Activated CD4-positive, alpha-beta T cell treated with anti-CD3 and anti-CD28 coated beads for 36 hours (primary cell): ENCODE measurements at regions of chr1 and their contacts with region 1.

Region 1: GRCh38 chr1:156689035-156689952 is 12.1 kb upstream of the NES start:
- DNase-seq: peak; percentile 88
- ATAC-seq: peak; percentile 96
- H3K4me3 Mint-ChIP-seq: peak overlapping the region; percentile 6
- H3K27ac Mint-ChIP-seq: no peak overlapping the region
- H3K4me1 Mint-ChIP-seq: peaks cover 29% of the 10 kb centered on the region
- H3K27me3 Mint-ChIP-seq: peaks cover 48% of the 10 kb centered on the region

Region 2: DNA sequence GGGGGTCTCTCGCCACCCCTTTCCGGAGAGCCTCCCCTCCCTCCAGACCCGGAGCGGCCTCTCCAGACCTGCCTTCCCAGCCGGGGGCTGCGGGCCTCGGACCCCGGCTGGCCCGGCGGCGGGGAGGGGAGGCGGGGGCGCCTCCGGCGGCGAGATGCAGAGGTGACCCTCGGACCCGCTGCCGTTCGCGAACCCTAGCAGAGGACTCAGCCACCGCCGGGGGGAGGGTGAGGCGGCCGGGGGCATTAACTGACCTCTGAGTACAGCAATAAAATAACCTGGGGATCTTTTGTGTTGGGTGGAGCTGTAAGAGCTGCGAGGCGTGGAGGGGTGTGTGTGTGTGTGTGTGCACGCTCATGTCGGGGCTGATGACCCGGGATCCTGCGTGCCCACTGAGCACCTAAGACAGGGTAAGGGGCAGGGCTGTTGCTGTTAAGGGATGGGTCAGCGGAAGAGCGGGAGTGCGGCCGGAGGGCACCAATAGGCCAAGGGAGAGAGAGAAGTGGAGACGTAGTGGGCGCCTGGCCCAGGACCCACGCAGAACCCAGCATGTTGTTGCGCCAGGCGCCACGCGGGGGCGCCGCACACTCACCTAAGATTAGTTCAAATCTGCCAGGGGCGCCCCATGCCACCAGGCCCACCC is 63.7 kb before region 1 on chr1:
- CTCF ChIA-PET with region 1: interaction called, 15 read pairs
- POLR2A ChIA-PET with region 1: no interaction called
- intact Hi-C with region 1: no loop called
- DNase-seq: peak; percentile 83
- ATAC-seq: peak; percentile 65
- H3K4me3 Mint-ChIP-seq: peak overlapping the region; percentile 53
- H3K27ac Mint-ChIP-seq: no peak overlapping the region
- H3K4me1 Mint-ChIP-seq: peaks cover 6% of the 10 kb centered on the region
- H3K27me3 Mint-ChIP-seq: peaks cover 41% of the 10 kb centered on the region

Region 3: GRCh38 chr1:156677616-156678596 is 11.4 kb before region 1 on chr1:
- CTCF ChIA-PET with region 1: interaction called, 57 read pairs
- POLR2A ChIA-PET with region 1: interaction called, 3 read pairs
- intact Hi-C with region 1: no loop called
- DNase-seq: peak; percentile 53
- ATAC-seq: peak; percentile 44
- H3K4me3 Mint-ChIP-seq: no peak overlapping the region
- H3K27ac Mint-ChIP-seq: no peak overlapping the region
- H3K4me1 Mint-ChIP-seq: peaks cover 11% of the 10 kb centered on the region
- H3K27me3 Mint-ChIP-seq: peaks cover 43% of the 10 kb centered on the region

Region 4: GRCh38 chr1:156717275-156717805 is 28.0 kb after region 1 on chr1:
- CTCF ChIA-PET with region 1: interaction called, 50 read pairs
- POLR2A ChIA-PET with region 1: no interaction called
- intact Hi-C with region 1: no loop called
- DNase-seq: no peak
- ATAC-seq: no peak
- H3K4me3 Mint-ChIP-seq: no peak overlapping the region
- H3K27ac Mint-ChIP-seq: no peak overlapping the region
- H3K4me1 Mint-ChIP-seq: peaks cover 8% of the 10 kb centered on the region
- H3K27me3 Mint-ChIP-seq: no peaks in the 10 kb centered on the region

Region 5: GRCh38 chr1:156860113-156860627 is 170.9 kb after region 1 on chr1:
- CTCF ChIA-PET with region 1: interaction called, 27 read pairs
- POLR2A ChIA-PET with region 1: no interaction called
- intact Hi-C with region 1: loop called (anchors 1 to 5 kb)
- DNase-seq: peak; percentile 77
- ATAC-seq: peak; percentile 47
- H3K4me3 Mint-ChIP-seq: peak overlapping the region; percentile 56
- H3K27ac Mint-ChIP-seq: no peak overlapping the region
- H3K4me1 Mint-ChIP-seq: peaks cover 25% of the 10 kb centered on the region
- H3K27me3 Mint-ChIP-seq: peaks cover 45% of the 10 kb centered on the region

Region 6: DNA sequence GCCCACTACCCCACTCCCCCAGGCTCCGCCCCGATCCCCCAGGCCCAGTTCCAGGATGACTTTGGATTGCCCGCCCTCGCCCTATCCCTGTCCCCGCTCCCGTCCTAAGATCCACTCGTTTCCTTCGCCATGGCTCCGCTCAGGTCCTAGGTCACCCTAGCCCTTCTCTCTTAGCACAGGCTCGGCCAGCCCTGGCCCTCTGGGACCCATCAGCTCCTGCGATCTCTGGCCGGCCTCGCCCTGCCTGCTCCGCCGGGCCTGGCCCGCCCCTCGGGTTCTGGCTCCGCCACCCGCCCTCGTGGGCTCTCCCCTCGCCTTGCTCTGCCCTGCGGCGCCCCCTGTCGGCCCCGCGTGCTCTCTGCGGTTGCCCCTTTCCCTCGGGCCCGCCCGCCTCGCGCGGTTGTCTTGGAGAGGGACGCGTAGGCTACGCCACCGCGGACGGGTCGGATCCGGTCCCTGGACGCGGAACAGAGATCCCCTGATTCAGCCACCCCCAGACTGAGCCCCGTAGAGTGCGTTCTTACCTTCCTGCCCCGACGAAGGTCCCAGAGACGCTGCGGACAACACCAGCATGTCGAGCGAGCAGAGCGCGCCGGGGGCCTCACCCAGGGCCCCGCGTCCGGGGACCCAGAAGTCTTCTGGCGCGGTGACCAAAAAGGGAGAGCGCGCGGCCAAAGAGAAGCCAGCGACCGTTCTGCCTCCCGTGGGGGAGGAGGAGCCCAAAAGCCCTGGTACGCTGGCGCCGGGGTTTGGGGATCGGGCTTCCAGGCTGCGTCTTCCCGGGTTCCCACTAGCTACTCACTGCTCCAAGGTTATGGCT is 231.1 kb after region 1 on chr1 and contains the start of gene LRRC71:
- CTCF ChIA-PET with region 1: interaction called, 10 read pairs
- POLR2A ChIA-PET with region 1: no interaction called
- intact Hi-C with region 1: loop called in 1 of 2 experiments (anchors 5 kb)
- DNase-seq: peak; percentile 87
- ATAC-seq: peak; percentile 92
- H3K4me3 Mint-ChIP-seq: no peak within 1 kb of the TSS
- H3K27ac Mint-ChIP-seq: no peak within 1 kb of the TSS
- H3K4me1 Mint-ChIP-seq: peaks cover 6% of the 10 kb centered on the region
- H3K27me3 Mint-ChIP-seq: peaks cover 57% of the 10 kb centered on the region
- total RNA-seq, gene LRRC71: not detected